CD8-positive, alpha-beta T cell (primary cell): ENCODE measurements at regions of chr14 and their contacts with region 1.

Region 1: DNA sequence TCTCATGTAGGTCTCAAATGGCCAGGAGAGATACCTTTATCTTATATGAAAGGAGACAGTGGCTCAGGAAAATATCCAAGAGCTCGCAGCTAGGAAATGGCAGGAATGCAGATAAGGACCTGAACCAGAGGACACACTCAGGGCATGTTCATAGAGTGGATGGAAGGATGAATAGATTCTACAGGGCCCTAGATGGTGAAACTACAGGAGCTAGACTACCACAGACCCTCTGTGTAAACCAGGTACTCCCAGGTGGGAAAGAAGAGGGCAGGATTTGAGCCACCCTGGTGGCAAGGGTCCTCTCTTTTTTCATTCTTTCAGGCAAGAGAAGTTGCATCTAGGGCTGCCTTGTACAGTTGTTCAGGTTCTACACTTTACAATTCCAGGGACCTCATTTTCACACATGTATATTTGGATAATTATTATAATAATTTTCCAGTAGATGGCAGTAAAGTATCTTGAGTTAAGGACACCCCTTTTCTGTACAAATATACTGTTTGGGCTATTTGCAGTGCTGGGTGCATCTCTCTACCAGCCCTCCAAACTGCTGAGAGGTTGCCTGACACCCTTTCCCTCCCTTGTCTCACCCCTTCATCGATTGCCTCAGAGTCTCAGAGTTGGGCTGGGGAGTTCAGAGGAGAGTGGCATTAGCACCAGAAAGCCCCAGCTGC is 10.5 kb upstream of the ZDHHC22 start:
- DNase-seq: peak in 2 of 9 experiments; percentile 20 to 42
- ATAC-seq: peak; percentile 38
- H3K4me3 ChIP-seq: no peak overlapping the region
- H3K4me3 Mint-ChIP-seq: no peak overlapping the region
- H3K27ac ChIP-seq: no peak overlapping the region
- H3K27ac Mint-ChIP-seq: no peak overlapping the region
- H3K4me1 ChIP-seq: no peaks in the 10 kb centered on the region
- H3K4me1 Mint-ChIP-seq: no peaks in the 10 kb centered on the region
- H3K27me3 ChIP-seq: peaks cover 0 to 3% of the 10 kb centered on the region in 2 experiments
- H3K27me3 Mint-ChIP-seq: peaks cover 52% of the 10 kb centered on the region
- CTCF ChIP-seq: peak; percentile 30

Region 2: GRCh38 chr14:77139540-77140358 is 12.3 kb before region 1 on chr14:
- CTCF ChIA-PET with region 1: interaction called, 24 read pairs
- POLR2A ChIA-PET with region 1: no interaction called
- intact Hi-C with region 1: no loop called
- DNase-seq: peak in 5 of 9 experiments; percentile 26 to 45 (median 38)
- ATAC-seq: peak; percentile 52
- H3K4me3 ChIP-seq: no peak overlapping the region
- H3K4me3 Mint-ChIP-seq: peak overlapping the region; percentile 53
- H3K27ac ChIP-seq: no peak overlapping the region
- H3K27ac Mint-ChIP-seq: no peak overlapping the region
- H3K4me1 ChIP-seq: no peaks in the 10 kb centered on the region
- H3K4me1 Mint-ChIP-seq: peaks cover 27% of the 10 kb centered on the region
- H3K27me3 ChIP-seq: peaks cover 15 to 32% of the 10 kb centered on the region in 2 experiments
- H3K27me3 Mint-ChIP-seq: peaks cover 73% of the 10 kb centered on the region
- CTCF ChIP-seq: no peak

Region 3: DNA sequence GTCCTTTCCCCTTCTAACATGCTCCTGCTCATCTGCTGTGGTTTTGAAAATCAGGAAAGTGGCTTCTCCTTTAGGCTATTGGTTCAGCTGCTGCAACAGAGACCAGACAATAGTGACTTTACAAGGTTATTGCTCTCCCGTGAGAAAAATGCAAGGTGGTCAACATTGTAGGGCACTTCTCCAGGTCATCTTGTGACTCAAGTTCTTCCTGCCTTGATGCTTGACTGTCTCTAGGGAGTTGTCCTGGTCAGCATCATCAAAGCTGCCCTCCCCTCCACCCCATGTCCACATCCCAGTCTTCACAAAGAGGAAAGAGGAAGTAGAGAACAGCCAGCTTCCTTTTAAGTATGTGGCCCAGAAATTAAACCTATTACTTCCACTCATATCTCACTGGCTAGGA is 25.6 kb after region 1 on chr14:
- CTCF ChIA-PET with region 1: no interaction called
- POLR2A ChIA-PET with region 1: no interaction called
- intact Hi-C with region 1: no loop called
- DNase-seq: no peak
- ATAC-seq: no peak
- H3K4me3 ChIP-seq: no peak overlapping the region
- H3K4me3 Mint-ChIP-seq: no peak overlapping the region
- H3K27ac ChIP-seq: no peak overlapping the region
- H3K27ac Mint-ChIP-seq: no peak overlapping the region
- H3K4me1 ChIP-seq: peaks cover 6% of the 10 kb centered on the region
- H3K4me1 Mint-ChIP-seq: peaks cover 8% of the 10 kb centered on the region
- H3K27me3 ChIP-seq: no peaks in the 10 kb centered on the region
- H3K27me3 Mint-ChIP-seq: peaks cover 17% of the 10 kb centered on the region
- CTCF ChIP-seq: no peak

Region 4: DNA sequence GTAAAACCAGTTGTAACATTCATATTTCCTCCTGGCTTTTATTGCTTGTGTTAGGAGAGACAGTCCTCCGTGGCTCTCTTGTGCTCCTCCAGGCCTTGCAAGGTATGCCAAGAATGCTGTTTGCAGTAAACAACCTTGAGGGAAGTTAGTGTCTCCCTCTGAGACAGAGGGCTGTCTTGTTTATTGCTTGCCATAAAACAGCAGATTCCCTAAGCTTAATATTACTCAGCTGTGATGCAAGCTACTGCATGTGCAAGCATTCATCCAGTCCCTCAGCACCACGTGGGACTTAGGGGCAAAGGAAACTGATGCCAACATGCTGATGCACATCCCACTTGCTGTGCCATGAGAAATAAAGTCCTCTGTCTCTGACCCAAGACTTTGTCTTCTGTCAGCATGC is 162.0 kb after region 1 on chr14:
- CTCF ChIA-PET with region 1: interaction called, 33 read pairs
- POLR2A ChIA-PET with region 1: no interaction called
- intact Hi-C with region 1: loop called in 1 of 2 experiments (anchors 1 kb)
- DNase-seq: no peak
- ATAC-seq: no peak
- H3K4me3 ChIP-seq: no peak overlapping the region
- H3K4me3 Mint-ChIP-seq: no peak overlapping the region
- H3K27ac ChIP-seq: no peak overlapping the region
- H3K27ac Mint-ChIP-seq: no peak overlapping the region
- H3K4me1 ChIP-seq: no peaks in the 10 kb centered on the region
- H3K4me1 Mint-ChIP-seq: peaks cover 6% of the 10 kb centered on the region
- H3K27me3 ChIP-seq: no peaks in the 10 kb centered on the region
- H3K27me3 Mint-ChIP-seq: no peaks in the 10 kb centered on the region
- CTCF ChIP-seq: no peak

Region 5: GRCh38 chr14:78561069-78561468 is 1409.0 kb after region 1 on chr14:
- CTCF ChIA-PET with region 1: no interaction called
- POLR2A ChIA-PET with region 1: no interaction called
- intact Hi-C with region 1: loop called in 1 of 2 experiments (anchors 5 kb)
- DNase-seq: no peak
- ATAC-seq: no peak
- H3K4me3 ChIP-seq: no peak overlapping the region
- H3K4me3 Mint-ChIP-seq: no peak overlapping the region
- H3K27ac ChIP-seq: no peak overlapping the region
- H3K27ac Mint-ChIP-seq: no peak overlapping the region
- H3K4me1 ChIP-seq: no peaks in the 10 kb centered on the region
- H3K4me1 Mint-ChIP-seq: no peaks in the 10 kb centered on the region
- H3K27me3 ChIP-seq: no peaks in the 10 kb centered on the region
- H3K27me3 Mint-ChIP-seq: no peaks in the 10 kb centered on the region
- CTCF ChIP-seq: no peak

Region 6: GRCh38 chr14:78598041-78598920 is 1446.2 kb after region 1 on chr14:
- CTCF ChIA-PET with region 1: no interaction called
- POLR2A ChIA-PET with region 1: no interaction called
- intact Hi-C with region 1: loop called in 1 of 2 experiments (anchors 2 kb)
- DNase-seq: peak in 8 of 9 experiments; percentile 1 to 52 (median 25)
- ATAC-seq: no peak
- H3K4me3 ChIP-seq: no peak overlapping the region
- H3K4me3 Mint-ChIP-seq: no peak overlapping the region
- H3K27ac ChIP-seq: no peak overlapping the region
- H3K27ac Mint-ChIP-seq: no peak overlapping the region
- H3K4me1 ChIP-seq: no peaks in the 10 kb centered on the region
- H3K4me1 Mint-ChIP-seq: no peaks in the 10 kb centered on the region
- H3K27me3 ChIP-seq: no peaks in the 10 kb centered on the region
- H3K27me3 Mint-ChIP-seq: peaks cover 1% of the 10 kb centered on the region
- CTCF ChIP-seq: peak; percentile 55

Region 7: DNA sequence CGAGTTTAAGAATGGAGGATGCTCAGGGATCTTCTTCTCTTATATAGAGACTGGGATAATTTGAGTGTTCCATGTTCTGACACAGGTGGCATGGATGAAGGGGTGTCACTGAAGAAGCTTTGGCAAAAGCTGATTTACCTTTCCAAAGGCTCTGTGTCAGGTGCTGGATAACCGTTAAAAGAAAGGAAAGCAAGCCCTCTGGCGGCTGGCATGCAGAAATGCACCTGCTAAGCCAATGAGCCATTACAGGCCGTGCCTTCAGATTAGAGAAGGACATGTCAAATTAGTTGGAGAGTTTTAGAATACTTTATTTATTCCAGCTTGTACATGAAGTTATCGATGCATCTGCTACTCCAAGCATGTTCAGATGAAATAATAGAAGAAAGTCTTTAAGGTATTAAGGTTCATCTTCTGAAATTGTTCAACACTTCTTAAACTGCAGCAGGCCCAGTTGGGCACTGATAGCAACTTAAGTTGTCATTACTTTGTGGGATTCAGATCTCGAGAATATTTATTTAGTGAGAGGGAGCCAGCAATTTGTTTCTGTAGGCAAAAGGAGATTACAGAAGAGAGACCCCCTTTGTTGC is 1696.3 kb after region 1 on chr14:
- CTCF ChIA-PET with region 1: no interaction called
- POLR2A ChIA-PET with region 1: no interaction called
- intact Hi-C with region 1: loop called in 1 of 2 experiments (anchors 10 kb)
- DNase-seq: peak in 3 of 9 experiments; percentile 5 to 14 (median 8)
- ATAC-seq: no peak
- H3K4me3 ChIP-seq: no peak overlapping the region
- H3K4me3 Mint-ChIP-seq: no peak overlapping the region
- H3K27ac ChIP-seq: no peak overlapping the region
- H3K27ac Mint-ChIP-seq: no peak overlapping the region
- H3K4me1 ChIP-seq: no peaks in the 10 kb centered on the region
- H3K4me1 Mint-ChIP-seq: no peaks in the 10 kb centered on the region
- H3K27me3 ChIP-seq: no peaks in the 10 kb centered on the region
- H3K27me3 Mint-ChIP-seq: peaks cover 2% of the 10 kb centered on the region
- CTCF ChIP-seq: peak; percentile 36